ENCODE measurements at regions of chr15 and their contacts with region 1.

Region 1: GRCh38 chr15:87781959-87782625 is 474.4 kb downstream of the NTRK3 start:
- DNase-seq: no peak
- ATAC-seq: no peak
- H3K4me3 ChIP-seq: no peak overlapping the region
- H3K4me3 Mint-ChIP-seq: no peak overlapping the region
- H3K27ac ChIP-seq: no peak overlapping the region
- H3K27ac Mint-ChIP-seq: no peak overlapping the region
- H3K4me1 ChIP-seq: no peaks in the 10 kb centered on the region
- H3K4me1 Mint-ChIP-seq: no peaks in the 10 kb centered on the region
- H3K27me3 ChIP-seq: no peaks in the 10 kb centered on the region
- H3K27me3 Mint-ChIP-seq: no peaks in the 10 kb centered on the region
- CTCF ChIP-seq: no peak

Region 2: GRCh38 chr15:87722941-87723691 is 59.0 kb before region 1 on chr15:
- CTCF ChIA-PET with region 1: no interaction called
- POLR2A ChIA-PET with region 1: no interaction called
- intact Hi-C with region 1: loop called in 1 of 2 experiments (anchors 10 kb)
- DNase-seq: no peak
- ATAC-seq: no peak
- H3K4me3 ChIP-seq: no peak overlapping the region
- H3K4me3 Mint-ChIP-seq: no peak overlapping the region
- H3K27ac ChIP-seq: no peak overlapping the region
- H3K27ac Mint-ChIP-seq: no peak overlapping the region
- H3K4me1 ChIP-seq: no peaks in the 10 kb centered on the region
- H3K4me1 Mint-ChIP-seq: no peaks in the 10 kb centered on the region
- H3K27me3 ChIP-seq: no peaks in the 10 kb centered on the region
- H3K27me3 Mint-ChIP-seq: no peaks in the 10 kb centered on the region
- CTCF ChIP-seq: no peak

Measured in CD8-positive, alpha-beta T cell (primary cell).